ENCODE measurements at regions of chr1 and their contacts with region 1.

Region 1: DNA sequence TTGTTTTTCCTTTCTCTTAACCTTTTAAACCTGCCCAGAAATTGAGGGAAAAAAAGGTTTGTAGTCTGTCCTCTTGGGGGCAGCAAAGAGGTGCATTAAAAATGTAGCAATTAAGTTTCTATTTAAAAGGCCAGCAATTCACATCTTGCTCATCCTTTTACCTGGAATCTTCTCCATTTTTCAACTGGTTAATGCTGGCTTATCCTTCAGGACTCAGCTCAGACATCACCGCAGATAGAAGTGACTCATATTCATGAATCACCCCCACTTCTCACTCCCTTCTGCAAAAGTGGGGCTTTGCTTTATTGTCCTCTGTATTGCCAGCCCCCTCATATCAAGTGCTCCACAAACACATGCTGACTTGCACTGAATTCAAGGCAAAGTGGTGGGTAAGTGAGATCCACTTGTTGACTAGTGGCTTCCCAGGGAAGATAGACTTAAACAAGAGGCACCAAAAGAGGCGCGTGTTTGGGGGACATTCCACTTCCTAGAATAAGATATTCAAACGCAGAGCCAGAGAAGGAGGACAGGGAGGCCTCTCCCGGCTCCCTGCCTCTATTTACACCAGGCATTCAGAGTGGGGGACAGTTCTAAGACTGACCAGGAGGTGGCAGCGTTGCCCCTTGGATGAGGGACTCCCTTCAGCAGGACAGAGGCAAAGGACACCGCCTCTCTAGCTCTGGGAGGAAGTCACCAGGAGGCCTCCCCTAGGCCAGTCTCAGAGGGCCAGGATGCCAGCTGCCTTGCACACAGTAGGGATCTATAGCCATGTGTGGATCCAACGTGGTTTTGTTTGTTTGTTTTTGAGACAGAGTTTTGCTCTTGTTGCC is 23.2 kb upstream of the ZNF648 start:
- DNase-seq: peak; percentile 84 to 86
- ATAC-seq: peak; percentile 91 to 94 (median 94)
- H3K4me3 ChIP-seq: no peak overlapping the region
- H3K27ac ChIP-seq: no peak overlapping the region
- H3K4me1 ChIP-seq: peaks cover 0 to 12% (median 5%) of the 10 kb centered on the region in 9 donors
- H3K27me3 ChIP-seq: no peaks in the 10 kb centered on the region
- CTCF ChIP-seq: peak; percentile 73 to 88 (median 87)

Region 2: GRCh38 chr1:181587870-181588438 is 496.7 kb before region 1 on chr1:
- intact Hi-C with region 1: no loop called
- DNase-seq: no peak
- ATAC-seq: no peak
- H3K4me3 ChIP-seq: no peak overlapping the region
- H3K27ac ChIP-seq: no peak overlapping the region
- H3K4me1 ChIP-seq: no peaks in the 10 kb centered on the region
- H3K27me3 ChIP-seq: peaks cover 0 to 45% (median 19%) of the 10 kb centered on the region in 7 donors
- CTCF ChIP-seq: no peak

Region 3: DNA sequence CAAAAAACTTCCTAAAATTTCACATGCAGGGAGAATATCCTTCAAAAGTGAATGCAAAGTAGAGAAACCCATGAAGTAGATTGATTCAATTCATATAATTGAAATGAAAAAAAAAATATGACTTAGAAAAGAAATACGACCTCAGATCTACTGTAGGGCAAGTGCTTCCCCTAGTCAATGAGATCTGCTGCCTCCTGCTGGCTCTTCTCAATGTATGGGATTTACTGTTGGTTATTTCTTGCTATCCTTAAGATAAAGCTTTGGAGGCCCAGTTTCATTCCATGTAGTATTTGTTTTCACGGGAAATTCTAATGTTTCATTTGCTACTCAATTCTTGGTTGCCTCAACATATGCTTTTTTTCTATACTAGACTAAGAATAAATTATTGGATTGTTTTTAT is 69.3 kb before region 1 on chr1:
- intact Hi-C with region 1: no loop called
- DNase-seq: no peak
- ATAC-seq: no peak
- H3K4me3 ChIP-seq: no peak overlapping the region
- H3K27ac ChIP-seq: no peak overlapping the region
- H3K4me1 ChIP-seq: no peaks in the 10 kb centered on the region
- H3K27me3 ChIP-seq: no peaks in the 10 kb centered on the region
- CTCF ChIP-seq: peak in 7 of 9 donors; percentile 16 to 51 (median 25)

Region 4: DNA sequence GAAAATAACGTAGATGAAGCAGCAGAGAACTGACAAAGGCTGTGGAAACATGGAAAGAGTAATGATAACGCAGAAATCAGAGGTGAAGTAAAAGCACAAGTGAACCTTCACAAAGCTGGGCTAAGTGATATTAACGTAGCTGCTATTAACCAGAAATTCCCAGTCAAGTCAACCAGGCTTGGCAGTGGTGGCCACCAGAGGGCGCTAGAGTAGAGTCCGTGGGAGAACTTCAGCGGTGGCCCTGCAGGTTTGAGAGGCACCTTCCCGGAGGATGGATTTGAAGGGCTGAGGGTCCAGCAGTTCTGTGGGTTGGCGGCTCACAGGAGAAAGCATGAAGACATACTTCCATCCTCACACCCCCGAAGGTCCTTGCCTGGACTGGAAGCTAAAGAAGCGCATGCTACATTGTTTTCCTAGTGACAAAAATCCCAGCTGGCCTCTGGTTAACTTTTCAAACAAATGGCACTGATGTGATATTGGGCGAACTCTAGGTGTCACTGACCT is 58.5 kb after region 1 on chr1:
- intact Hi-C with region 1: loop called in 6 of 10 experiments (anchors 2 to 10 kb)
- DNase-seq: peak; percentile 94 to 95
- ATAC-seq: peak; percentile 65 to 93 (median 83)
- H3K4me3 ChIP-seq: no peak overlapping the region
- H3K27ac ChIP-seq: peak overlapping the region; percentile 69 to 98 (median 84)
- H3K4me1 ChIP-seq: peaks cover 8 to 52% (median 19%) of the 10 kb centered on the region in 9 donors
- H3K27me3 ChIP-seq: peaks cover 0 to 3% (median 0%) of the 10 kb centered on the region in 7 donors
- CTCF ChIP-seq: peak; percentile 93 to 99 (median 96)

Region 5: GRCh38 chr1:182397771-182398393 is 313.2 kb after region 1 on chr1:
- intact Hi-C with region 1: loop called (anchors 1 to 5 kb)
- DNase-seq: no peak
- ATAC-seq: no peak
- H3K4me3 ChIP-seq: no peak overlapping the region
- H3K27ac ChIP-seq: peak overlapping the region in 2 of 10 donors; percentile 4 to 39
- H3K4me1 ChIP-seq: peaks cover 0 to 35% (median 19%) of the 10 kb centered on the region in 9 donors
- H3K27me3 ChIP-seq: no peaks in the 10 kb centered on the region
- CTCF ChIP-seq: no peak

Region 6: DNA sequence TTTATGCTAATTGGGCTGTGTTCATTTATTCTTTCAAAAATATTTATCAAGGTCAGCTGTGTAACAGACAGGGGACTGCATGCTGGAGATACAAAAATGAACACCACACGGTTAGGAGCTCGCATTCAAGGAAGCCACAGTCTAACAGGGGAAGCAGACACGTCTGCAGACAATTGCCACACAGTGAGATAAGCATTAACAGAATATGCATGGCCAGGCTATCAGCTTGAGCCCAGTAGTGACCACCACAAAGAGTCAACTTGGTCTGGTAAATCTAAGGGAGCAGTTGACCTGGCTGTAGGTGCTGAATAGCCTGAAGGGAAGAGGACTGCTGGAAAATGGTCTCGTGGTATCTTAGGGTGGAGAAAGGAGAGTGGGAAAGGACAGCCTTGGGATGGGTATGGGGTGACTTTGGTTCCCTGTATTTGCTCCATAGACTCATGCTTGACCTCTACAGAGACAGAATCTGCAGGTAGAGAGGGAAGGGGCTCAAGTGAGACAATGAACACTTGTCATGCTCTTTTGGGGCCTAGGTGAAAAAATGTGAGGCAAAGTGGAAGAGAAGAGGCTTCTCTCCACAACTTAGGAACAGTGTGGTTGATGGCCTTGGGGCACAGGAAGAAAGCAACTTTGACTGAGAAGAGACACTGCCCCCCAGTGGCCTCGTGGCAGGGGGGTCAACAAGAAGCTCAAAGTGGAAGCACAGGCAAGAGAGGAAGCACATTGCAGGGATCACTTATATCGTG is 697.3 kb after region 1 on chr1:
- intact Hi-C with region 1: loop called in 8 of 10 experiments (anchors 5 to 10 kb)
- DNase-seq: peak; percentile 69 to 79
- ATAC-seq: peak; percentile 72 to 86 (median 84)
- H3K4me3 ChIP-seq: no peak overlapping the region
- H3K27ac ChIP-seq: no peak overlapping the region
- H3K4me1 ChIP-seq: peaks cover 0 to 24% (median 3%) of the 10 kb centered on the region in 9 donors
- H3K27me3 ChIP-seq: no peaks in the 10 kb centered on the region
- CTCF ChIP-seq: peak; percentile 50 to 88 (median 83)